ENCODE measurements at regions of chr4 and their contacts with region 1.

Region 1: DNA sequence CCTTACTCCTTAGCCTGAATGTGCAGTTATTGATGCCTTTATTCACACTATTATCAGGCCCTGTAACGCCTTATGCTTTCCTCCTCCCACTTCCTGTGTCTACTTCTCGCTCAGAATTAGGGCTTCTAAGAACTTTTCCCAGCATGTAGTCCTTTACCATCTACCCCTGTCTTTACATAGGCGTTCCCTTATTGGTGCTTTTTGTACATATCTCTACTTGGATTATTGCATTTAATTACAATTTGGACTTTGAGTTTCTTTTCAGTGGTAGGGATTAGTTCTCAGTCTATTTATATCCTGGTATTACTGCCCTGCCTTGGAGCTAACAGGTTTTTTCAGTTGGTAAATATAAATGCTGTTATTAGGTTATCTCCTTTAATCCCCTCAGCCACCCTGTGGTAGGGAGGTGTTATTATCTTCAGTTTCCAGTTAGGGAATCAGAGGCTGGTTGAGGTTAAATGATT is 84.0 kb downstream of the RBPJ start:
- DNase-seq: no peak
- H3K4me3 ChIP-seq: no peak overlapping the region
- H3K27ac ChIP-seq: peak overlapping the region in 7 of 59 donors; percentile 29 to 57 (median 47)
- H3K27me3 ChIP-seq: no peaks in the 10 kb centered on the region
- CTCF ChIP-seq: peak in 7 of 56 donors; percentile 8 to 29 (median 16)

Region 2: DNA sequence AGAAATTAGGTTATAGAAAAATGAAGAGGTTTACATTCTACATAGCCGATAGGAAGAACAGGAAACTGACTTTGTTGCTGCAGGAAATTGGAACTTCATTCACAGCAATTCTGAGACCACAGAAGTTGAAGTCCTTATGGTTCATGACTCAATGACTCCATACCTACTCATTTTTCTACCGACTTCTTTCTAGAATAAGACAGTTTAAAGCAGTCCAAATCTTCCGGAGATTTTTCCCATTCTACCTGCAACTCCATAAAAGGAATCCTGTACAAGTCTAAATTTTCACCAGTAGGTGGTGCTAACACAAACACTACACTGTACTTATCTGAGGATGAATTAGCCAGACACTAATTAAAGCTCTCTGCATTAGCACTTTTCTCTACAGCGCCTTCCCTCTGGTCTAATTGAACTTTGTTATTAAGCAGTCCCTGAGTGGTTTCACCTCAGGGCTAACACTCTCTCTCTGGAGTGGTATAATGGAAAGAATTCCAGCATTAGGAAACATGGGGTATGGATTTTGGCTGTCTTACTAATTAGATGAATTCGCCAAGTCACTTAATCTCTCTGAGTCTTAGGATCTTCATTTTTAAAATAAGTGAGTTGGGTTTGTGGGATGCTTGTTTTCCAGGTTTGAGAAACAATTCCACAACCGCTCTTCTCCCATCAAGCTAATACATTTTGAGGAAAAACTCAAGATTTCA is 322.8 kb before region 1 on chr4:
- intact Hi-C with region 1: loop called in 1 of 2 experiments (anchors 10 kb)
- DNase-seq: no peak
- H3K4me3 ChIP-seq: no peak overlapping the region
- H3K27ac ChIP-seq: no peak overlapping the region
- H3K27me3 ChIP-seq: peaks cover 0 to 11% (median 0%) of the 10 kb centered on the region in 45 donors
- CTCF ChIP-seq: peak; percentile 49 to 89 (median 76)